Endothelial cell of umbilical vein (primary cell): ENCODE measurements at regions of chr2 and their contacts with region 1.

Region 1: GRCh38 chr2:127810619-127811396 is at the start of gene WDR33:
- DNase-seq: peak; percentile 91
- H3K4me3 ChIP-seq: peak within 1 kb of the TSS; percentile 50 to 100 (median 97)
- H3K27ac ChIP-seq: peak within 1 kb of the TSS; percentile 83
- H3K4me1 ChIP-seq: peaks cover 10% of the 10 kb centered on the region
- H3K27me3 ChIP-seq: no peaks in the 10 kb centered on the region
- CTCF ChIP-seq: no peak
- POLR2A ChIP-seq: peak; percentile 86
- total RNA-seq, gene WDR33: 52.5 and 54.7 TPM in 2 replicates

Region 2: GRCh38 chr2:127857265-127857808 is 46.5 kb after region 1 on chr2:
- CTCF ChIA-PET with region 1: no interaction called
- POLR2A ChIA-PET with region 1: interaction called, 3 read pairs
- dilution Hi-C with region 1: no loop called
- intact Hi-C with region 1: loop called (anchors 5 kb)
- DNase-seq: no peak
- H3K4me3 ChIP-seq: peak overlapping the region; percentile 97 to 99 (median 98)
- H3K27ac ChIP-seq: peak overlapping the region; percentile 55
- H3K4me1 ChIP-seq: peaks cover 7% of the 10 kb centered on the region
- H3K27me3 ChIP-seq: no peaks in the 10 kb centered on the region
- CTCF ChIP-seq: no peak
- POLR2A ChIP-seq: no peak

Region 3: GRCh38 chr2:127874378-127875271 is 63.8 kb after region 1 on chr2:
- CTCF ChIA-PET with region 1: no interaction called
- POLR2A ChIA-PET with region 1: no interaction called
- dilution Hi-C with region 1: no loop called
- intact Hi-C with region 1: no loop called
- DNase-seq: no peak
- H3K4me3 ChIP-seq: no peak overlapping the region
- H3K27ac ChIP-seq: peak overlapping the region; percentile 31
- H3K4me1 ChIP-seq: no peaks in the 10 kb centered on the region
- H3K27me3 ChIP-seq: no peaks in the 10 kb centered on the region
- CTCF ChIP-seq: no peak
- POLR2A ChIP-seq: no peak